Left cardiac atrium (tissue), 4 donors: ENCODE measurements at regions of chr3 and their contacts with region 1.

Region 1: GRCh38 chr3:108552267-108553159 is 36.7 kb downstream of the CIP2A start:
- DNase-seq: no peak
- ATAC-seq: peak; percentile 65 to 76

Region 2: GRCh38 chr3:108489771-108490170 is 62.7 kb before region 1 on chr3:
- intact Hi-C with region 1: loop called (anchors 1 to 5 kb)
- DNase-seq: no peak
- ATAC-seq: peak; percentile 44 to 50